ENCODE measurements at regions of chr9 and their contacts with region 1.

Region 1: GRCh38 chr9:72038890-72039410 is 21.5 kb downstream of the C9orf57 start:
- DNase-seq: peak; percentile 72 to 85
- ATAC-seq: peak; percentile 92
- H3K4me3 ChIP-seq: no peak overlapping the region
- H3K27ac ChIP-seq: no peak overlapping the region
- H3K4me1 ChIP-seq: no peaks in the 10 kb centered on the region
- H3K27me3 ChIP-seq: no peaks in the 10 kb centered on the region

Region 2: DNA sequence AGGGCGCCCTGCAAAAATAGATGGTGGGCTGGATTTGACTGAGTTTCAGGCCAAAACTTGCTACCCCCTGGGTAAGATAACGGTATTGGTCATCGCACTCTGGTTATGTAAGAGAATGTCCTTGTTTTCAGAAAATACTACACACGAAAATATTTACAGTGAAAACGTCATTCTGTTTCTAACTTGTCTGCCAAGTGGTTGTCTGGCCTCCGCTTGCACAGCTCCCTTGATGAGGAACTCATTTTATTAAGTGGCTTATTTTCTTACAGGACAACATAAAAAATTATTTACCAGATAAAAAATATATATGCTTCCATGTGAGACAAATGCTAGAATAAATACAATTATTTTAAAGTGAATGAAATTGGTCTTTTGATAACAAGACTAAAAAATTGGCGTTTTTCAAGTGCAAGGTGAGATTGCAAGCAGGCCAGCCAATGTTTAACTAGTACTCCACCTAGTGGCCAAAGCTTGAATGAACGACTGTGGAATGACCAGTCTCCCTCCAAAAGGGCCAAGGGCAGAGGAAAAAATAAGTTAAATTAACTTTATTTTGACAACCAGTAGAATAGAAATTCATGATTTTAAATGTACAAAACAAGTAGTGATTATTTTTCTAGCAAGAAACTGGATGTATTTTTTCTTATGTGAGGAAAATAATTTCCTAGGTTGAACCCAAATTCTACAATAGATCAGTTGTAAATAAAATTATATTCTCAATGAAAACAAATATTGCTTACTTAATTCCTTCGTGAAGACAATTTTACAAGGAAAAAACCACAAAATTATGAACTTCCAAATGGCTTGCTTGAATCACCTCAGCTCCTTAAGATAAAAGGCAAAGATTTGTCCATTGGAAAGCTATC is 232.9 kb after region 1 on chr9:
- intact Hi-C with region 1: loop called (anchors 1 to 2 kb)
- DNase-seq: no peak
- ATAC-seq: peak; percentile 74
- H3K4me3 ChIP-seq: no peak overlapping the region
- H3K27ac ChIP-seq: no peak overlapping the region
- H3K4me1 ChIP-seq: no peaks in the 10 kb centered on the region
- H3K27me3 ChIP-seq: no peaks in the 10 kb centered on the region

Measured in aorta (tissue), 5 donors.